Activated CD8-positive, alpha-beta T cell treated with anti-CD3 and anti-CD28 coated beads for 36 hours (primary cell): ENCODE measurements at regions of chr14 and their contacts with region 1.

Region 1: DNA sequence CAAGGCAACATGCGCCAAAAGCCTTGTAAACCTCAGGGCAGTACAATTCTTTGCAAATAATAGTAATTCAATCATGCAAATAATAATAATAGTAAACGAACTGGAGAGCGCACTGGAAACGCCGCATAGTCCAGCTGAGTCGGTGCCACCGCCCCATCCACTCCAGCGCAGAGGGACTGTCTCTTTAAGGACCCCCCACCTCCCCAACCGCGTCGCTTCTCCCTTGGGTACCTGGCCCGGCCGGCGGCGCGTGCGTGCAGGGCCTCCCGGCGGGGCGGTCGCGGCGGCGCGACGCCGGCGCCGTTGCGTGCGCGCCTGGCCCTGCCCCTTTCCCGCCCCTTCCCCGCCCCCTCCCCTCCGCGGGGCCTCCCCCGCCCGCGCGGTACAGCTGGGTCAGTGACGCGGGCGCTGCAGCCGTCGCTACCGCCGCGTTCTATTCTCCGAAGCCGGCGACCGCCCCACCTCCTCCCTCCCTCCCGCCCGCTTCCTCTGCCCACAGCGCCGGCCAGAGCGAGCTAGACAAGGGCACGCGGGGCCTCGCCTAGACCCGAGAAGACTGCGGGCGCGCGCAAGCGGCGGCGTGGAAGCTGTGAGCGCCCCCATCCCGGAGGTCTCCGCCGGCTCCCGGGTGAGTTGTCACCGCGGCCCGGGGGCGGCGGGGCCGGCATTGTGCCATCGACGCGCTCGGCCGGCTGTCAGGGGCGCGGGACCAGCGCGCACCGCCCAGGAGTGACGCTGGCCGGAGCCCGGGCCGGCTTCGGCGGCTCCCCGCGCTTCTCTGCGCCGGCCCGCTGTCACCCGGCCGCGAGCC is at the start of gene SUSD6:
- DNase-seq: peak; percentile 90
- ATAC-seq: peak; percentile 82
- H3K4me3 Mint-ChIP-seq: peak within 1 kb of the TSS; percentile 96
- H3K27ac Mint-ChIP-seq: peak within 1 kb of the TSS; percentile 92
- H3K4me1 Mint-ChIP-seq: peaks cover 48% of the 10 kb centered on the region
- H3K27me3 Mint-ChIP-seq: no peaks in the 10 kb centered on the region
- CTCF ChIP-seq: no peak
- total RNA-seq, gene SUSD6: 35.7 to 36.2 TPM

Region 2: DNA sequence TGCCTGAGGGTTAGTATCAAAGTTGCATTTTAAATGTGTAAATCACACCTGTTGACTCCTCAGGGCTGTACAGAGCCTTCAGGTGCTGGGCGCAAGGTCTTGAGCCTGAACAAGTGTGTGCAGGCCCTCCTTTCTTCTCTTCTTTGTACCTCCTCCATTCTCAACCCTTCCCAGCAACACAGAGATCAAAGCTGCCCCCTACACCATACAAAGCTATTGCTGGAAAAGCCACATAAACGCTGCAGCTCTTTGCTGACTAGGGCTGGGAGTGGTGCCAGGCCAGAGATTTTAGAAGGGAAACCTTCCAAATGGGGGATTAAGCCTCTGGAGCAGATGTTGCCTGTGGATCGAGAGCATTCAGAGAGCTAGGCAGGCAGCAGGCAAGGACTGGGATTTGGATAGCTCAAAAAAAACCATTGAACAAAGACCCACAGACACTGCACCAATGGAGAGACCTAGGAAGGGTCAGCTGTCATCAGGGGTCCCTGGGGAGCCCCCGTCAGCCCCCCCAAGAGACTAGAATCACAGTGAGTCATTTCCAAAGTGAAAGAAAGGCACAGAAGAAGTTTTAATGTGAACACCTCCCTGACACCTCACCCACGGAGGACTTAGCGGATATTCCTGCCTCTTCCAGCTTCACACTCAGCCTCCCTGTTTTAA is 18.3 kb before region 1 on chr14:
- CTCF ChIA-PET with region 1: interaction called, 13 read pairs
- POLR2A ChIA-PET with region 1: interaction called, 5 read pairs
- intact Hi-C with region 1: no loop called
- DNase-seq: no peak
- ATAC-seq: no peak
- H3K4me3 Mint-ChIP-seq: no peak overlapping the region
- H3K27ac Mint-ChIP-seq: no peak overlapping the region
- H3K4me1 Mint-ChIP-seq: no peaks in the 10 kb centered on the region
- H3K27me3 Mint-ChIP-seq: no peaks in the 10 kb centered on the region
- CTCF ChIP-seq: no peak

Region 3: GRCh38 chr14:69625299-69626131 is 14.1 kb after region 1 on chr14:
- CTCF ChIA-PET with region 1: interaction called, 5 read pairs
- POLR2A ChIA-PET with region 1: interaction called, 21 read pairs
- intact Hi-C with region 1: no loop called
- DNase-seq: peak; percentile 96
- ATAC-seq: peak; percentile 92
- H3K4me3 Mint-ChIP-seq: peak overlapping the region; percentile 67
- H3K27ac Mint-ChIP-seq: peak overlapping the region; percentile 94
- H3K4me1 Mint-ChIP-seq: peaks cover 84% of the 10 kb centered on the region
- H3K27me3 Mint-ChIP-seq: no peaks in the 10 kb centered on the region
- CTCF ChIP-seq: no peak

Region 4: DNA sequence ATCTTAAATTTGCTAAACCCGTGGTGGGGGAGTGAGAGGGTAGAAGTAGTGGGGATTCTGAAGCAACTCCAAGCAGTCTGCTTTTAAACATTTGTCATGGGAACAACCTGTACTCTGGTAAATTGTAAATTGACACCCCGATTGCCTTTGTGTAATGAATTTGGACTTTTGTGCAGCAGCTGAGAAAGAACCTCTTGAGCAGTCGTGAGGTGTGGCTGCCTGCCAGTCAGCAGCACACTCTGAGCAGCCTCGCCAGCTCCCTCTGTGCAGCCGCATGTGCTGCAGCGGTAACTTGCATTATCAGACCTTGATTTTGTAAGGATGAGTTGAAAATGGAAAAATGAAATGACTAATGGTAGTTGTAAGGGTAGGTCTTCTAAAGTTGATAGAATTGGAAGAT is 74.3 kb after region 1 on chr14:
- CTCF ChIA-PET with region 1: interaction called, 5 read pairs
- POLR2A ChIA-PET with region 1: interaction called, 8 read pairs
- intact Hi-C with region 1: loop called (anchors 2 kb)
- DNase-seq: peak; percentile 54
- ATAC-seq: peak; percentile 48
- H3K4me3 Mint-ChIP-seq: peak overlapping the region; percentile 28
- H3K27ac Mint-ChIP-seq: peak overlapping the region; percentile 97
- H3K4me1 Mint-ChIP-seq: peaks cover 72% of the 10 kb centered on the region
- H3K27me3 Mint-ChIP-seq: no peaks in the 10 kb centered on the region
- CTCF ChIP-seq: no peak